ENCODE measurements at regions of chr3 and their contacts with region 1.

Region 1: GRCh38 chr3:43690400-43691119 is at the start of gene ABHD5:
- DNase-seq: peak; percentile 94 to 99 (median 96)
- ATAC-seq: peak; percentile 96
- H3K4me3 ChIP-seq: peak within 1 kb of the TSS; percentile 74
- H3K4me3 Mint-ChIP-seq: peak within 1 kb of the TSS; percentile 91 to 98 (median 94)
- H3K27ac ChIP-seq: peak within 1 kb of the TSS; percentile 85
- H3K27ac Mint-ChIP-seq: peak within 1 kb of the TSS; percentile 90 to 97 (median 92)
- H3K4me1 ChIP-seq: peaks cover 8% of the 10 kb centered on the region in 2 donors
- H3K4me1 Mint-ChIP-seq: peaks cover 11 to 47% (median 37%) of the 10 kb centered on the region in 7 donors
- H3K27me3 ChIP-seq: no peaks in the 10 kb centered on the region
- H3K27me3 Mint-ChIP-seq: peaks cover 0 to 6% (median 0%) of the 10 kb centered on the region in 5 donors
- total RNA-seq, gene ABHD5: 6.1 to 21.0 (median 12.1) TPM

Region 2: GRCh38 chr3:42600111-42600988 is 1090.2 kb before region 1 on chr3 and contains the start of gene NKTR:
- CTCF ChIA-PET with region 1: no interaction called
- POLR2A ChIA-PET with region 1: no interaction called
- intact Hi-C with region 1: loop called in 1 of 2 experiments (anchors 10 kb)
- DNase-seq: peak; percentile 98 to 100 (median 100)
- ATAC-seq: peak; percentile 97
- H3K4me3 ChIP-seq: peak within 1 kb of the TSS; percentile 75
- H3K4me3 Mint-ChIP-seq: peak within 1 kb of the TSS; percentile 91 to 98 (median 95)
- H3K27ac ChIP-seq: peak within 1 kb of the TSS; percentile 93
- H3K27ac Mint-ChIP-seq: peak within 1 kb of the TSS; percentile 95 to 99 (median 98)
- H3K4me1 ChIP-seq: peaks cover 11 to 25% of the 10 kb centered on the region in 2 donors
- H3K4me1 Mint-ChIP-seq: peaks cover 26 to 53% (median 43%) of the 10 kb centered on the region in 7 donors
- H3K27me3 ChIP-seq: no peaks in the 10 kb centered on the region
- H3K27me3 Mint-ChIP-seq: peaks cover 0 to 2% (median 0%) of the 10 kb centered on the region in 5 donors
- total RNA-seq, gene NKTR: 110 to 275 (median 238) TPM

Region 3: DNA sequence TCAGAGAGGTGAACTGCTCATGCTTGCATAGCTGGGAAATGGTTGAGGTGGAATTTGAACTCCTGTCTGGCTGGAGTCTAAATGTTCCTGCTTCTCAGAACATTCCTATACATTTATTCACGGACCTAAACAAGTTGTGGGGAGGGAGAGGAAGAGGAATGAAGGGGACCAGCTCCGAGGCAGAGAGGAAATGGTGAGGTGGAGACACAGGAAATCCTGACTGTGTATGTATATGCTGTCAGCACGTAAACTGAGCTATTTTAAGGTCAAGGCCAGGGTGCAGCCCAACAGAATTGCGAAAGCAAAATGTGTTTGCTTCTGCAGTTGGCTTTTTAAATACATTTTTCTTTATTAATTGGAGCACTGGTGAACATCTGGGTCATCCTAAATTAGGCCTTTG is 510.5 kb before region 1 on chr3:
- CTCF ChIA-PET with region 1: no interaction called
- POLR2A ChIA-PET with region 1: no interaction called
- intact Hi-C with region 1: loop called in 1 of 2 experiments (anchors 10 kb)
- DNase-seq: peak in 7 of 9 donors; percentile 38 to 66 (median 61)
- ATAC-seq: peak; percentile 86
- H3K4me3 ChIP-seq: peak overlapping the region; percentile 37
- H3K4me3 Mint-ChIP-seq: peak overlapping the region; percentile 66 to 82 (median 79)
- H3K27ac ChIP-seq: peak overlapping the region; percentile 50
- H3K27ac Mint-ChIP-seq: peak overlapping the region; percentile 82 to 97 (median 93)
- H3K4me1 ChIP-seq: peaks cover 32 to 41% of the 10 kb centered on the region in 2 donors
- H3K4me1 Mint-ChIP-seq: peaks cover 47 to 76% (median 71%) of the 10 kb centered on the region in 7 donors
- H3K27me3 ChIP-seq: no peaks in the 10 kb centered on the region
- H3K27me3 Mint-ChIP-seq: no peaks in the 10 kb centered on the region

Region 4: GRCh38 chr3:43707998-43708397 is 17.4 kb after region 1 on chr3:
- CTCF ChIA-PET with region 1: no interaction called
- POLR2A ChIA-PET with region 1: no interaction called
- intact Hi-C with region 1: no loop called
- DNase-seq: no peak
- ATAC-seq: peak; percentile 27
- H3K4me3 ChIP-seq: no peak overlapping the region
- H3K4me3 Mint-ChIP-seq: no peak overlapping the region
- H3K27ac ChIP-seq: no peak overlapping the region
- H3K27ac Mint-ChIP-seq: no peak overlapping the region
- H3K4me1 ChIP-seq: no peaks in the 10 kb centered on the region
- H3K4me1 Mint-ChIP-seq: peaks cover 0 to 12% (median 0%) of the 10 kb centered on the region in 7 donors
- H3K27me3 ChIP-seq: no peaks in the 10 kb centered on the region
- H3K27me3 Mint-ChIP-seq: no peaks in the 10 kb centered on the region

Region 5: GRCh38 chr3:43753781-43754201 is 63.2 kb after region 1 on chr3:
- CTCF ChIA-PET with region 1: interaction called, 3 read pairs
- POLR2A ChIA-PET with region 1: interaction called, 12 read pairs
- intact Hi-C with region 1: loop called (anchors 1 to 5 kb)
- DNase-seq: no peak
- ATAC-seq: no peak
- H3K4me3 ChIP-seq: no peak overlapping the region
- H3K4me3 Mint-ChIP-seq: no peak overlapping the region
- H3K27ac ChIP-seq: no peak overlapping the region
- H3K27ac Mint-ChIP-seq: peak overlapping the region in 3 of 9 donors; percentile 30 to 97 (median 71)
- H3K4me1 ChIP-seq: peaks cover 8 to 41% of the 10 kb centered on the region in 2 donors
- H3K4me1 Mint-ChIP-seq: peaks cover 18 to 55% (median 46%) of the 10 kb centered on the region in 7 donors
- H3K27me3 ChIP-seq: no peaks in the 10 kb centered on the region
- H3K27me3 Mint-ChIP-seq: peaks cover 0 to 10% (median 0%) of the 10 kb centered on the region in 5 donors

Region 6: DNA sequence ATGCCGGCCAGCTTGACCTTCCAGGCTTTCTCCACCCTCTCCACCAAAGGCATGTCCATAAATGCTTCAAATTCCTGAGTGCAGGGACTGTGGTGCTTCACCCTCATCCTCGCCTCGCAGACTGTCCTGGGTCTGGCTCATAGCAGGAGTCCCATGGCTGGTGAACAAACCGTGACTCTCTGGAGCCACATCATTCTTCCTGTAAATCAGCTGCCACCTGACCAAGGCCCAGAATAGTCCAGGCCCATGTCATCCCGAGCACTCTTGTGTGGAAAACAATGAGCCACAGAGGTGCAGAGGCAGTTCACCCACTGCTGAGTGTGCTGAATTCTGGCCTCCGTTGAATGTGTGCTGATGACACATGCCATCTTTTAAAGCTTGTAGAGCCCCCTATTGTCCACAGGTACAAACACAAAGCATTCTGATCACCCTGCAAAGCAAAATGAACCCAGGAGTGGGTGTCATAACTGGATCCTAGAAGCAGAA is 68.8 kb after region 1 on chr3:
- CTCF ChIA-PET with region 1: interaction called, 3 read pairs
- POLR2A ChIA-PET with region 1: interaction called, 12 read pairs
- intact Hi-C with region 1: loop called (anchors 1 to 5 kb)
- DNase-seq: peak in 5 of 9 donors; percentile 2 to 30 (median 26)
- ATAC-seq: peak; percentile 34
- H3K4me3 ChIP-seq: no peak overlapping the region
- H3K4me3 Mint-ChIP-seq: peak overlapping the region in 1 of 10 donors; percentile 12
- H3K27ac ChIP-seq: no peak overlapping the region
- H3K27ac Mint-ChIP-seq: peak overlapping the region in 5 of 9 donors; percentile 56 to 97 (median 84)
- H3K4me1 ChIP-seq: peaks cover 8 to 41% of the 10 kb centered on the region in 2 donors
- H3K4me1 Mint-ChIP-seq: peaks cover 19 to 54% (median 51%) of the 10 kb centered on the region in 7 donors
- H3K27me3 ChIP-seq: no peaks in the 10 kb centered on the region
- H3K27me3 Mint-ChIP-seq: peaks cover 0 to 9% (median 0%) of the 10 kb centered on the region in 5 donors

Region 7: DNA sequence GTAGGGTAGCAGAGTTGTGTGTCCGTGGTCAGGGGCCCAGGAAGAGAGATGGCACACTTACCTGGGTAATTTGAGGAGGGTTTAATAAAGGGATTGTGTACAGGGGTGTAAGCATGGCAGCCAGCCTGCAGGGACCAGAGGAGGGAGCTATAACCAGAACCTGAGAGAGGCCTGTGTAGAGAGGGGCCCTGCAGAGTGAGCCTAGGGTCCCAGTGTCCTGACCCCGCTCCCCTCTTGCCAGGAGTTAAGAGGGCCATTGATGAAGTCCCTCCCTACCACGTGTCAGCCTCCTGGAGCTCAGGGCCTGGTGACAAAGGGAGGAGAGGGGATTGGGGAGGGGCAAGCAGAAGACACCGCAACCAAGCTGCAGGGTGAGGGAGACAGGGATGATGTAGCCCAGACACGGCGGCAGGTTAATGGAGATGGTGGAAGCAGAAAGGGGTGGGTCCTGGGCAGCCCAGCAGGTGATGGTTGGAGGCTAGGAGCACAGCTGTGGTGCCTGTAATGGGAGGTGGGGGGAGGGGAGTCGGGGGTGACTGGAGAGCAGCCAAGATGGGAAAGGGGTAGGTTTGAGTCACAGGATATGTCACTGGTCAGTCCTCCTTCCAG is 385.8 kb after region 1 on chr3:
- CTCF ChIA-PET with region 1: no interaction called
- POLR2A ChIA-PET with region 1: no interaction called
- intact Hi-C with region 1: no loop called
- DNase-seq: no peak
- ATAC-seq: no peak
- H3K4me3 ChIP-seq: no peak overlapping the region
- H3K4me3 Mint-ChIP-seq: no peak overlapping the region
- H3K27ac ChIP-seq: no peak overlapping the region
- H3K27ac Mint-ChIP-seq: no peak overlapping the region
- H3K4me1 ChIP-seq: no peaks in the 10 kb centered on the region
- H3K4me1 Mint-ChIP-seq: no peaks in the 10 kb centered on the region
- H3K27me3 ChIP-seq: no peaks in the 10 kb centered on the region
- H3K27me3 Mint-ChIP-seq: peaks cover 0 to 10% (median 0%) of the 10 kb centered on the region in 5 donors